Heart right ventricle (tissue), 16 donors: ENCODE measurements at regions of chr10 and their contacts with region 1.

Region 1: GRCh38 chr10:122342293-122343134 is 32.0 kb upstream of the PLEKHA1 start:
- DNase-seq: peak in 1 of 2 donors; percentile 61
- ATAC-seq: peak in 6 of 8 donors; percentile 19 to 66 (median 48)
- H3K4me3 ChIP-seq: no peak overlapping the region
- H3K27ac ChIP-seq: peak overlapping the region in 7 of 10 donors; percentile 40 to 80 (median 66)
- H3K4me1 ChIP-seq: peaks cover 2 to 41% (median 16%) of the 10 kb centered on the region in 9 donors
- H3K27me3 ChIP-seq: no peaks in the 10 kb centered on the region
- CTCF ChIP-seq: peak; percentile 64 to 87 (median 84)

Region 2: DNA sequence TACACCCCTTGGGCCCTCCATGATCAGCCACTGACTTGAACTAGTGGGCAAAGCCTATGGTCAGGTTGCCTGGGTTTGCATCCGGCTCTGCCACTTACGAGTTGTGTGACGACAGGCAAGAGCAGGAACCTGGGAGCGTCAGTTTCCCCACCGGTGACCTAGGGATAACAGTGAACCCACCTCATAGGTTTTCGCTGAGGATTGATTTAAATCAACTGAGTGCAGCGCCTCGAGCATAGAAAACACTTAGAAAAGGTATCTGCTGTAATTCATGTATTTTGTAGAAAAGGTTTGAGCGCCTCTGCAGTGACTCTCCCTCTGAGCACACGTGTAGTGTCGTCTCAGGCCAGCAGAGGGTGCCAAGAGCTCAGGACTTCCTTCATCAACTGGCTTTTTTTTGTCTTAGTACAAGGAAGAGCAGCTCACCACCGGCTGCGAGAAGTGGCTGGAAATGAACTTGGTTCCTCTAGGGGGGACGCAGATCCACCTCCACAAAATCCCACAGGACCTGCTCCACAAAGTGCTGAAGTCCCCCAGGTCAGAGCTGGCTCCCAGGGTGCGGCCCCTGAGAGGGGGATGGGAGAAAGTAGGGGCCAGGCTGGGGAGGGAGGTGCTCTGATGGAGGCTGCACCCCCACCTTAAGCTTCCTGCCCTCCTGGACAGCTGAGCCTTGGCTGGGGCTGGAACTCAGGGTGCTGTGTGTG is 43.8 kb before region 1 on chr10:
- intact Hi-C with region 1: loop called in 7 of 10 experiments (anchors 2 to 5 kb)
- DNase-seq: peak; percentile 70 to 72
- ATAC-seq: peak; percentile 77 to 92 (median 89)
- H3K4me3 ChIP-seq: peak overlapping the region in 4 of 10 donors; percentile 2 to 25 (median 14)
- H3K27ac ChIP-seq: no peak overlapping the region
- H3K4me1 ChIP-seq: peaks cover 0 to 14% (median 6%) of the 10 kb centered on the region in 9 donors
- H3K27me3 ChIP-seq: no peaks in the 10 kb centered on the region
- CTCF ChIP-seq: peak; percentile 84 to 96 (median 92)

Region 3: GRCh38 chr10:122307669-122308486 is 34.6 kb before region 1 on chr10:
- intact Hi-C with region 1: loop called in 2 of 10 experiments (anchors 1 to 5 kb)
- DNase-seq: peak; percentile 40 to 81
- ATAC-seq: peak; percentile 81 to 94 (median 92)
- H3K4me3 ChIP-seq: peak overlapping the region in 6 of 10 donors; percentile 3 to 24 (median 16)
- H3K27ac ChIP-seq: peak overlapping the region; percentile 74 to 96 (median 84)
- H3K4me1 ChIP-seq: peaks cover 9 to 37% (median 28%) of the 10 kb centered on the region in 9 donors
- H3K27me3 ChIP-seq: no peaks in the 10 kb centered on the region
- CTCF ChIP-seq: no peak

Region 4: GRCh38 chr10:122419876-122420623 is 77.5 kb after region 1 on chr10:
- intact Hi-C with region 1: loop called in 1 of 10 experiments (anchors 5 kb)
- DNase-seq: no peak
- ATAC-seq: peak in 4 of 8 donors; percentile 40 to 63 (median 52)
- H3K4me3 ChIP-seq: no peak overlapping the region
- H3K27ac ChIP-seq: peak overlapping the region in 1 of 10 donors; percentile 53
- H3K4me1 ChIP-seq: peaks cover 0 to 66% (median 30%) of the 10 kb centered on the region in 9 donors
- H3K27me3 ChIP-seq: no peaks in the 10 kb centered on the region
- CTCF ChIP-seq: no peak

Region 5: GRCh38 chr10:122435212-122435827 is 92.8 kb after region 1 on chr10:
- intact Hi-C with region 1: loop called (anchors 2 to 10 kb)
- DNase-seq: no peak
- ATAC-seq: peak in 1 of 8 donors; percentile 43
- H3K4me3 ChIP-seq: no peak overlapping the region
- H3K27ac ChIP-seq: no peak overlapping the region
- H3K4me1 ChIP-seq: no peaks in the 10 kb centered on the region
- H3K27me3 ChIP-seq: no peaks in the 10 kb centered on the region
- CTCF ChIP-seq: peak; percentile 47 to 89 (median 70)